B cell (primary cell): ENCODE measurements at regions of chr20 and their contacts with region 1.

Region 1: GRCh38 chr20:36919715-36920333 is 31.7 kb downstream of the SAMHD1 start:
- DNase-seq: peak; percentile 69
- ATAC-seq: no peak
- H3K4me3 ChIP-seq: no peak overlapping the region
- H3K4me3 Mint-ChIP-seq: no peak overlapping the region
- H3K27ac ChIP-seq: no peak overlapping the region
- H3K27ac Mint-ChIP-seq: no peak overlapping the region
- H3K4me1 ChIP-seq: no peaks in the 10 kb centered on the region
- H3K4me1 Mint-ChIP-seq: peaks cover 1% of the 10 kb centered on the region
- H3K27me3 ChIP-seq: no peaks in the 10 kb centered on the region
- H3K27me3 Mint-ChIP-seq: no peaks in the 10 kb centered on the region
- CTCF ChIP-seq: peak; percentile 96

Region 2: DNA sequence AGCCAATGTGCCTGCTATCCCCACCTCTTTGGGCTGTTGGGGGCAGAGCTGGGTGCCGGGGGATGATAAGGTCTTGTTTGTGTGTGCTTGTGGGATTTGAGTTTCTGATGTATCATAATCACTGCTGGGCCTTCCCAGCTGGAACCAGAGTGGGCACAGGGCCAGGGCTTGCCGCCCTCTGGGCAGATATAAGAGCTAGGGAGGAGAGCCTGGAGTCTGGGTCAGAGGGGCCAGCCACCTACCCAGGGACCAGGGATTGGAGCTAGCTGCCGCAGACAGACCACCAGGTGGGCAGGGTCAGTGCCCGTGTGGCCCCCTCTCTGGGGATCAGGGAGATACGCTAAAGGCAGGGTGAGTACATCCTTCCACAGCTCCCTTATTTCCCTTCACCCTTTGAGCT is 47.0 kb before region 1 on chr20:
- CTCF ChIA-PET with region 1: no interaction called
- POLR2A ChIA-PET with region 1: no interaction called
- intact Hi-C with region 1: no loop called
- DNase-seq: no peak
- ATAC-seq: no peak
- H3K4me3 ChIP-seq: no peak overlapping the region
- H3K4me3 Mint-ChIP-seq: no peak overlapping the region
- H3K27ac ChIP-seq: no peak overlapping the region
- H3K27ac Mint-ChIP-seq: peak overlapping the region; percentile 26
- H3K4me1 ChIP-seq: peaks cover 5 to 19% of the 10 kb centered on the region in 2 donors
- H3K4me1 Mint-ChIP-seq: peaks cover 15% of the 10 kb centered on the region
- H3K27me3 ChIP-seq: no peaks in the 10 kb centered on the region
- H3K27me3 Mint-ChIP-seq: no peaks in the 10 kb centered on the region
- CTCF ChIP-seq: no peak

Region 3: DNA sequence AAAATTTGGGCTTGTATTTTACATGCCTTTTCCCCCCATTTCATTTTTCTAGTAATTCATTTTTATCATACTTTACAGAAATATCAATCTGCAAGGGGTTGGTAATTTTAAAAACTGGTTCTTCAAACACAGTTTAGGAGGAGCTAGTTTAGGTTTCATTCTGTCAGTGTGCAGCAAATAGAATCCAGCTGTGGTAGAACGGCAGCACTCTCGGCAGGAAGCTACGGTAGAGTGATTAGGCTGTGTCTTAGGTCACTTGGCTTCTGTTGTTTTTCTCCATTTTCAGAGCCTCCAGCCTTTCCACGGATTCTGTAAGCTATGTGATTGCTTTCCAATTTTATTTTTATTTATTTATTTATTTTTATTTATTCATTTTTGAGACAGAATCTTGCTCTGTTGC is 11.2 kb before region 1 on chr20:
- CTCF ChIA-PET with region 1: interaction called, 14 read pairs
- POLR2A ChIA-PET with region 1: no interaction called
- intact Hi-C with region 1: no loop called
- DNase-seq: no peak
- ATAC-seq: no peak
- H3K4me3 ChIP-seq: no peak overlapping the region
- H3K4me3 Mint-ChIP-seq: no peak overlapping the region
- H3K27ac ChIP-seq: no peak overlapping the region
- H3K27ac Mint-ChIP-seq: no peak overlapping the region
- H3K4me1 ChIP-seq: peaks cover 0 to 3% of the 10 kb centered on the region in 2 donors
- H3K4me1 Mint-ChIP-seq: peaks cover 8% of the 10 kb centered on the region
- H3K27me3 ChIP-seq: no peaks in the 10 kb centered on the region
- H3K27me3 Mint-ChIP-seq: no peaks in the 10 kb centered on the region
- CTCF ChIP-seq: no peak

Region 4: GRCh38 chr20:36936341-36936740 is 16.5 kb after region 1 on chr20:
- CTCF ChIA-PET with region 1: interaction called, 10 read pairs
- POLR2A ChIA-PET with region 1: no interaction called
- intact Hi-C with region 1: no loop called
- DNase-seq: no peak
- ATAC-seq: no peak
- H3K4me3 ChIP-seq: no peak overlapping the region
- H3K4me3 Mint-ChIP-seq: no peak overlapping the region
- H3K27ac ChIP-seq: no peak overlapping the region
- H3K27ac Mint-ChIP-seq: no peak overlapping the region
- H3K4me1 ChIP-seq: no peaks in the 10 kb centered on the region
- H3K4me1 Mint-ChIP-seq: no peaks in the 10 kb centered on the region
- H3K27me3 ChIP-seq: no peaks in the 10 kb centered on the region
- H3K27me3 Mint-ChIP-seq: no peaks in the 10 kb centered on the region
- CTCF ChIP-seq: no peak